Activated CD8-positive, alpha-beta T cell treated with anti-CD3 and anti-CD28 coated beads, Interleukin-2, amount 10 ng/mL, durations not matched to agents 7 days and 5 days (primary cell): ENCODE measurements at regions of chrX and their contacts with region 1.

Region 1: DNA sequence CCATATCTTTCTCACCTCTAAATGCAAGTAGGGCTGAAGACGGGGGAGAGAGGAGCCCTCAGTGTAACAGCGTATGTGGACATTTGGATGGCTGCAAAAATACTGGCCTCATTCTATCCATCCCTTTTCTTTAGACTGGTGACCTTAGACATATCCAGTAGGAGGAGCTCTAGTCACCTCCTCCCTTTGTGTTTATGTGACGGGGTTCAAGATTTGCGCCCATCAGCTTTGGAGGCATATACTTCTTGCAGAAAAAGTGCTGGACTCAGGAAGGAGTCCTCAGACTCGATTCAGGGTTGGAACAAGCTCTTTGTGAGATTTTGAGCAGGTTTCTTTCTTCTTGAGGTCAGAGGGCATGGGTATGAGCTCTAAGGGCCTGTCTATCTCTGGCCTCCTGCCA is 86.2 kb downstream of the MAMLD1 start:
- DNase-seq: no peak
- ATAC-seq: no peak
- H3K4me3 Mint-ChIP-seq: no peak overlapping the region
- H3K27ac Mint-ChIP-seq: no peak overlapping the region
- H3K4me1 Mint-ChIP-seq: peaks cover 14% of the 10 kb centered on the region
- H3K27me3 Mint-ChIP-seq: no peaks in the 10 kb centered on the region

Region 2: DNA sequence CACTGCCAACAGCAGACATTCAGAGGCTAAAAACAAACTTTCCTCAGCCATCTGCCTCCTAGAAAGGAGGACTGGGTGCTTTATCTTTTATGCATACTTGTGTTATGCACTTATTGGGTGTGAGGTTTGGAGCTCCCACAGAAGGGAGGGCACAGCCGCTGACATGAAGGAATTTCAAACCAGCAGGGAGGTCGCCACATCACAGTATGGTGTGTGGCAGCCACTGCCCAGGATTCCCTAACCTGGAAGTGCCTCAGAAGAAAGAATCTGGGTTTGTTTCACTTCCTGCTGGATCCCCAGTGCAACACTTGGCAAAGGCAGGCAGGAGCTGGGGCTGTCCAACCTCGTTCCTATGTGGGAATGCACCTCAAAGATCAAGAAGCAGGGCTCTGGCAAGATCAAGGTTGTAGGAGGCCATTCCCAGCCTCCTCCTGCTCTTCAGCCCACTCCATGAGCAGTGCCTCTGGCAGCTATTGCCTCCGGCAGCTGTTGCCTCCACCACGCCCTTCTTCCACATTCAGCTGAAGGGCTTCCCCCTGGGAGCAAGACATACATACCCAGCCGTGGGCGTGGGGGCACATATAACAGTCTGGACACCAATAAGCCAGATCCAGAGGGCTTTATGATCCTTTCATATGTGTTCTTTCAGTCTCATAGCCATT is 195.2 kb before region 1 on chrX:
- CTCF ChIA-PET with region 1: no interaction called
- POLR2A ChIA-PET with region 1: no interaction called
- DNase-seq: no peak
- ATAC-seq: no peak
- H3K4me3 Mint-ChIP-seq: no peak overlapping the region
- H3K27ac Mint-ChIP-seq: no peak overlapping the region
- H3K4me1 Mint-ChIP-seq: peaks cover 23% of the 10 kb centered on the region
- H3K27me3 Mint-ChIP-seq: no peaks in the 10 kb centered on the region

Region 3: GRCh38 chrX:150478496-150479492 is 29.5 kb after region 1 on chrX:
- CTCF ChIA-PET with region 1: interaction called, 15 read pairs
- POLR2A ChIA-PET with region 1: no interaction called
- DNase-seq: peak; percentile 31
- ATAC-seq: peak; percentile 77
- H3K4me3 Mint-ChIP-seq: peak overlapping the region; percentile 30
- H3K27ac Mint-ChIP-seq: peak overlapping the region; percentile 75
- H3K4me1 Mint-ChIP-seq: peaks cover 57% of the 10 kb centered on the region
- H3K27me3 Mint-ChIP-seq: no peaks in the 10 kb centered on the region

Region 4: DNA sequence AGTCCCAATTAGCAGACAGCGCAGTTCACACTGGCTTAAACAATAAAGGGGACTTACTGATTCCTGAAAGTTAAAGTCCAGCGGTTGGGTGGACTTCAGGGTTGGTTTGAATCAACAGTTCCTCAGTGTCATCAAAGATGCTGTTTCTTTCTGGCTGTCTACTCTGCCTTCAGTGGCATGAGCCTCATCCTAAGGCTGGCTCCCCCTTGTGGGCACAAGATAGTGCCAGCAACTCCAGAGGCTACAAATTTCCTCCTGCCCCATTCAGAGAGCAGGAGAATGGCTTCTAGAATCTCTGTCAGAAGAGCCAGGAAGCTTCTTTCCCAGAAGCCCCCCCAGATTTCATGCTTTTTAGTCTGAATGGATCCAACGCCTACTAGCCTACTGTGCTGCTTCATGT is 36.7 kb after region 1 on chrX:
- CTCF ChIA-PET with region 1: interaction called, 16 read pairs
- POLR2A ChIA-PET with region 1: no interaction called
- DNase-seq: peak; percentile 57
- ATAC-seq: peak; percentile 70
- H3K4me3 Mint-ChIP-seq: no peak overlapping the region
- H3K27ac Mint-ChIP-seq: no peak overlapping the region
- H3K4me1 Mint-ChIP-seq: peaks cover 26% of the 10 kb centered on the region
- H3K27me3 Mint-ChIP-seq: peaks cover 3% of the 10 kb centered on the region

Region 5: GRCh38 chrX:150568320-150569154 is 119.2 kb after region 1 on chrX and contains the start of gene MTM1:
- CTCF ChIA-PET with region 1: interaction called, 11 read pairs
- POLR2A ChIA-PET with region 1: no interaction called
- DNase-seq: peak; percentile 94
- ATAC-seq: peak; percentile 93
- H3K4me3 Mint-ChIP-seq: peak within 1 kb of the TSS; percentile 83
- H3K27ac Mint-ChIP-seq: peak within 1 kb of the TSS; percentile 87
- H3K4me1 Mint-ChIP-seq: peaks cover 39% of the 10 kb centered on the region
- H3K27me3 Mint-ChIP-seq: no peaks in the 10 kb centered on the region
- total RNA-seq, gene MTM1: 28.7 to 34.8 TPM